MCF 10A (cell line): ENCODE measurements at regions of chr4 and their contacts with region 1.

Region 1: GRCh38 chr4:169254546-169254983 is 16.2 kb downstream of the SH3RF1 start:
- DNase-seq: peak; percentile 73
- H3K4me3 Mint-ChIP-seq: peak overlapping the region; percentile 5
- H3K27ac Mint-ChIP-seq: peak overlapping the region; percentile 7
- H3K4me1 Mint-ChIP-seq: peaks cover 54% of the 10 kb centered on the region
- H3K27me3 Mint-ChIP-seq: no peaks in the 10 kb centered on the region
- CTCF ChIP-seq: no peak

Region 2: DNA sequence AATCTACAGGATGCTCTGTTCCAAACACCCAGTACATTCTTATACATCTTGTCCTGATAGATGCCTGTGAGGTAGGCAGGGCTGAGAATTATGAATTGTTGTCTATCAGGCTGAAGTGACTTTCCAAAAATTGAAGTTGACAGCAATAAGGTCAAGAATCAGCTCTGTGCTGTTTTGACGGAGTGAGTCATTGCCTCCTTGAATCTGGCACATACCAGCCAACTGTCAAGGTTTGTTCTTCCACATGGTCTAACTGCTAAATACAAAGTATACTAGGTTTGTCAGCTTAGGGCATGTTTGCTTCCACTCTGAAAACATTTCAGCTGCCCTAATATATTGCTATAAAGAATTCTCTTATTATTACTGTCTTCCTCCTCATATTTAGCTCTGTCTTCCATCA is 16.1 kb before region 1 on chr4:
- CTCF ChIA-PET with region 1: interaction called, 4 read pairs
- POLR2A ChIA-PET with region 1: interaction called, 17 read pairs
- intact Hi-C with region 1: no loop called
- DNase-seq: peak; percentile 59
- H3K4me3 Mint-ChIP-seq: no peak overlapping the region
- H3K27ac Mint-ChIP-seq: no peak overlapping the region
- H3K4me1 Mint-ChIP-seq: peaks cover 39% of the 10 kb centered on the region
- H3K27me3 Mint-ChIP-seq: no peaks in the 10 kb centered on the region
- CTCF ChIP-seq: no peak

Region 3: DNA sequence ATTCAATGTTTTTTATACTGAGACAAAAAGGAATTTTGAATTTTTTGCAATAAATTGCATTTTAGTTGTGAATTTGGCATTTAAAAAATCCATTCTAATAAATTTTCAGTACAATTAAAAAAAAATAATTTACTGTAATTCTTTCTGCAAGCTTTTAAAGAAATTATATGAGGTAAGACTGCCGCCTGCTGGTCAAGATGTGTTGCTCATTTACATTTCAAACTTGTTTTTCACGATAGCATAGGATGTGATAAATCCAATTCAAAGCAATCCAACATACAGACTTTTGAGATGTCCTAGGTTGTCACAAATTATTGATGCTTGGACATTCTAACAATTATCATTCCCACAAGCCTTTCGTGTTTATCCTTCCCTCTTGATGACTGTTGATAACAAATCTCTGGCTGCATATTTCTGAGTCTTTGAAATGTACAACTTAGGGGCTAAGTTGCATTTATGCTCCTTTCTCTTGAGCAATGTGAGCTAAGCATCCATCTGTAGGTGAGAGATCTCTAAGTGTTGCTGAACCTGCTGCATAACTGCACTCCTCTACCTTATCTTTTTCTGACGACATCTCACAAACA is 793.3 kb after region 1 on chr4:
- CTCF ChIA-PET with region 1: no interaction called
- POLR2A ChIA-PET with region 1: no interaction called
- intact Hi-C with region 1: no loop called
- DNase-seq: peak; percentile 62
- H3K4me3 Mint-ChIP-seq: no peak overlapping the region
- H3K27ac Mint-ChIP-seq: no peak overlapping the region
- H3K4me1 Mint-ChIP-seq: no peaks in the 10 kb centered on the region
- H3K27me3 Mint-ChIP-seq: no peaks in the 10 kb centered on the region
- CTCF ChIP-seq: peak; percentile 69